Thyroid gland (tissue), 4 donors: ENCODE measurements at regions of chrX and their contacts with region 1.

Region 1: DNA sequence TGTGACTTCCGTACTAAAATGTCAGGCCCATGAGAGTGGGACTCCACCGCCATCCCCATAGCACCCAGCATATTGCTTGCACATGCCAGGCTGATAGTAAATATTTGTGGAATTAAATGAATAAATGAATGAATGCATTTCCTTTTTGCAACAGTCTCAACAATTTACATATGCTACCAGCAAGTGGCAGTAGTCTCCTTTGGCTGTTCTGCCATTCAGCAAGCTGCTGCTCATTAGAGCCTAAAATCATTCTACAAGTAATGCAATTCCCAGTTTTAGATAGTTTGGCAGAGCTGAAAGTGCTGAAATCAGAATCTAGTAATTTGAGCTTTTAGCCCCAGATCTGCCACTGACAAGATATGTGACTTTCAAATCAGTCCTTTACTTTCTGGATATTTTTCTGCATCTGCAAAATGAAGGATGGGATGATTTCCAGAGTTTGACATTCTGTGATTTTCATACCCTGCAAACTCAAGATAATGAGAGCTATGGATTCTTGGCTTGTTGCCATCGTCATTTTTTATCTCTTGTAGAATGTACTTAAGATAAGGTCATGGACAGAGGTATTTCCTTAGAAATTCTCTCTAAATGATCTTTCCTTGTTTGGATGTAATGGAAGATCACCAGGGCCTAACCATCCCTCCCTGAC is 35.7 kb upstream of the INTS6L start:
- DNase-seq: peak; percentile 3 to 5
- H3K4me3 ChIP-seq: no peak overlapping the region
- H3K27ac ChIP-seq: no peak overlapping the region
- H3K4me1 ChIP-seq: no peaks in the 10 kb centered on the region
- H3K27me3 ChIP-seq: no peaks in the 10 kb centered on the region
- CTCF ChIP-seq: peak in 4 of 6 experiments; percentile 37 to 64 (median 56)
- POLR2A ChIP-seq: no peak

Region 2: DNA sequence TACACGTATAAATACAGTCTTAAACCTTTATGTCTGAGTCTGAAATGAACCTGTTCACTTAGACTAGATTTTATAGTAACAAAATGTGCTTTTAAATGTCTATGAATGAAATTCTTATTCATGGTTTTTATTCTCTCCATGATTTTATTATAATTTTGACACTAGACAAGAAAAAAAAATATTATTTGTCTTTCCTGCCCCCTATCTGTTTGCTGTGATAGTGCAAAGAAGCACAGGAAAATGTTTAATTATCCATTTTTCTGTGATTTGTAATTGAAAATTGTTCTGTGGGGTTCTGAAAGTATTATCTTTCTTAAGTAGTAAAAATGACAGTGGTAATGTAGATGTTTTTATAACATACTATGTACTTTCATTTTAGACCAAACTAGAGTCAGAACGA is 87.7 kb after region 1 on chrX:
- intact Hi-C with region 1: loop called (anchors 10 kb)
- DNase-seq: no peak
- H3K4me3 ChIP-seq: no peak overlapping the region
- H3K27ac ChIP-seq: no peak overlapping the region
- H3K4me1 ChIP-seq: no peaks in the 10 kb centered on the region
- H3K27me3 ChIP-seq: no peaks in the 10 kb centered on the region
- CTCF ChIP-seq: peak in 3 of 6 experiments; percentile 35 to 46 (median 37)
- POLR2A ChIP-seq: no peak